ENCODE measurements at regions of chr2 and their contacts with region 1.

Region 1: DNA sequence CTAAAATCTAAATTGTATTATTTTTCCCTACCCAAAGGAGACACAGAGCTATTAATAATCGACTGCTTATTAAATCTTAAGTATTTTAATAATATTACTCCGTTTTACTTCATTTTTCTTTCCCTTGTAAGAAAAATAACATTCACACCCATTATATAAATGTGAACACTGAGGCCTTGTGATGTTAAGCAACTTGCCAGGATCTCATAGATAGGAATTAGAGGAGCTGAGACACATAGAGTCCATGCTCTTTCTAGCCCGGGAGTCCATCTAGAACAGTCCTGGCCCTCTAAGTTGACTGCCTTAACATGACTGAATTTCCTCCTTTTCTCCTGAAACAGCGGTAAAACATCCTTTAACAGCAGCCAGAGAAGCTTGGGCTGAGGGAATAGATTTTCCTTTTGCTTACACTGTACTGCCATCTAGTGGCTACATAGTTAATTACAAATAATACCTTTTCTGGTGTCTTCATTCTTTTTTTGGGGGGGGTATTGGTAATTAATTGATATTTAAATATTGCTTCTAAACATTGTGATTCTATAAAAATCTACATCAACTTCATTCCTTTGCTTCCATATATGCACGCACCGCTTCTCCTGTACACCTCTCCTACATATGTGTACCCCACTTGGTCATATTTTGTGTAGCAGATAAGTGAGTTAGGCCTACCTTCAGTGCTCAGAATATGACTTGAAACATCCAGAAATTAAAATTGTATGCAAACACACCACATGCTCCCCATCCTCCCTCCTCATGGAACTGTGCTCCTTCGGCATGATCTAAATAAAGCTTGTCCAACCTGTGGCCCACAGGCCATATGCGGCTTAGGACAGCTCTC is 125.8 kb upstream of the HNMT start:
- DNase-seq: no peak
- ATAC-seq: no peak
- H3K4me3 Mint-ChIP-seq: no peak overlapping the region
- H3K27ac Mint-ChIP-seq: no peak overlapping the region
- H3K4me1 Mint-ChIP-seq: no peaks in the 10 kb centered on the region
- H3K27me3 Mint-ChIP-seq: peaks cover 6% of the 10 kb centered on the region

Region 2: DNA sequence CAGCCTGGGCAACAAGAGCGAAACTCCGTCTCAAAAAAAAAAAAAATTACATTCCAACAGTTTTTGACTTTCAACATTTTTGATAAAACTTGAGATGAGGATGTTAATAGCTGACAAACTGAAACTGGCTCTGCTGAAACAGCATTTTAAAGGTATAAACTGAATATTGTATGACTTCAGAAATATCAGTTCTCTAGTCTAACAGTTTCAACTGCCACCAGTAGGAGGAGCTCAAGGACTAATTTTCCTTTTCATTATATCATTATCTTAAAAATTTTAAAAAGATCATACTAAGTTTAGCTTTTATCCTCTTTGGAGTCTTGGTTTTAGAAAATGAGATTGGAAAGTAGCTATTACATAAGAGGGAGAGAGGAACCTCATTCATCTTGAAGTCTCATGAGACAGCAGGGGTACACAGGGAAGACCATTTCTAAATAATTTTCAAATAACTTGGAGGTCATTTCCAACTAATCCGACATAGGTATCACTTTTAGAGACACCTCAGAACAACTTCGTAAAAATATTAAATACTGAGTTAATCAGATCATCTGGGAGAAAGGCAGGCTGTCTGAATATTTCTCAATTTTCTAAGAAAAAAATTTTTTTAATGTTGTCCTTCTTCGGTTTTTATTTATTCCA is 1924.6 kb before region 1 on chr2:
- CTCF ChIA-PET with region 1: no interaction called
- POLR2A ChIA-PET with region 1: no interaction called
- intact Hi-C with region 1: loop called (anchors 1 to 10 kb)
- DNase-seq: peak; percentile 53
- ATAC-seq: peak; percentile 58
- H3K4me3 Mint-ChIP-seq: no peak overlapping the region
- H3K27ac Mint-ChIP-seq: no peak overlapping the region
- H3K4me1 Mint-ChIP-seq: peaks cover 7% of the 10 kb centered on the region
- H3K27me3 Mint-ChIP-seq: no peaks in the 10 kb centered on the region

Region 3: GRCh38 chr2:136874258-136874657 is 964.2 kb before region 1 on chr2:
- CTCF ChIA-PET with region 1: no interaction called
- POLR2A ChIA-PET with region 1: no interaction called
- intact Hi-C with region 1: loop called in 1 of 2 experiments (anchors 2 kb)
- DNase-seq: no peak
- ATAC-seq: no peak
- H3K4me3 Mint-ChIP-seq: no peak overlapping the region
- H3K27ac Mint-ChIP-seq: no peak overlapping the region
- H3K4me1 Mint-ChIP-seq: no peaks in the 10 kb centered on the region
- H3K27me3 Mint-ChIP-seq: peaks cover 2% of the 10 kb centered on the region

Region 4: DNA sequence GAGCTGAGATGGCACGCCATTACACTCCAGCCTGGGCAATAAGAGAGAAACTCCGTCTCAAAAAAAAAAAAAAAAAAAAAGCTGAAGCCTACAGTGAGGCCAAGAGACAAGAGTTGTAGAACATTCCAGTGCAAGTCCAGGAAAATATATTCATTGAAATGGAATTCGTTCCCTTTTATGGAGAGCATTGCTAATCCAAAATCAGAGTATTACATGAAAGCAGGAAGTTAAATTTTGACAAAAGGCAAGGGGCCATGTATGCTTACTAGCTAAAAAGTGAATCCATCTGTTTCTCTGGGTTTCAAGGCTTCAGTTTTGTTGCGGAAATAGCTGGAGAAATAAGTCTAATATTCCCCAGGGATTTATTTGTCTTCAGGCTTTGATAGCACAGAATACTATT is 601.4 kb before region 1 on chr2:
- CTCF ChIA-PET with region 1: no interaction called
- POLR2A ChIA-PET with region 1: no interaction called
- intact Hi-C with region 1: loop called in 1 of 2 experiments (anchors 10 kb)
- DNase-seq: no peak
- ATAC-seq: no peak
- H3K4me3 Mint-ChIP-seq: no peak overlapping the region
- H3K27ac Mint-ChIP-seq: no peak overlapping the region
- H3K4me1 Mint-ChIP-seq: no peaks in the 10 kb centered on the region
- H3K27me3 Mint-ChIP-seq: no peaks in the 10 kb centered on the region

Region 5: GRCh38 chr2:137644731-137645130 is 193.7 kb before region 1 on chr2:
- CTCF ChIA-PET with region 1: no interaction called
- POLR2A ChIA-PET with region 1: no interaction called
- intact Hi-C with region 1: loop called in 1 of 2 experiments (anchors 10 kb)
- DNase-seq: no peak
- ATAC-seq: no peak
- H3K4me3 Mint-ChIP-seq: no peak overlapping the region
- H3K27ac Mint-ChIP-seq: no peak overlapping the region
- H3K4me1 Mint-ChIP-seq: no peaks in the 10 kb centered on the region
- H3K27me3 Mint-ChIP-seq: no peaks in the 10 kb centered on the region

Region 6: DNA sequence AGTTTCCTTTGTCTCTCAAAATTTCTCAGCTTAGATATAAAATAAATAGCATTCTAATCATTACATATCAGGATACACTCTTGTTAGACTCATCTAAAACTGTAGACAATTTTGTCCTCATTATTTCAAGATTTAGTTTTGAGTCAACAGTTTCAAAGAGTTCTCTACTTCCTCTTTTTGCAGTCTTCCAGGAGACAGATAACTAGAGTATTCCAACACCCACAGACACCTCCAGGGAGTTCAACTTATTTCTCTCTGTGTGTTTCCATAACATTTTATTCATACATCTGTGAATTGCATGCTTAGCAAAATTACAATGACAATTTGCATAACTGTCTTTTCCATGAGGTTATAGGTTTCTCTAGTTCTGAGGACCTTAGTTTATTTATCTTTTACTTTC is 40.8 kb before region 1 on chr2:
- CTCF ChIA-PET with region 1: no interaction called
- POLR2A ChIA-PET with region 1: no interaction called
- intact Hi-C with region 1: no loop called
- DNase-seq: no peak
- ATAC-seq: no peak
- H3K4me3 Mint-ChIP-seq: no peak overlapping the region
- H3K27ac Mint-ChIP-seq: no peak overlapping the region
- H3K4me1 Mint-ChIP-seq: no peaks in the 10 kb centered on the region
- H3K27me3 Mint-ChIP-seq: no peaks in the 10 kb centered on the region